ENCODE measurements at regions of chr2 and their contacts with region 1.

Region 1: DNA sequence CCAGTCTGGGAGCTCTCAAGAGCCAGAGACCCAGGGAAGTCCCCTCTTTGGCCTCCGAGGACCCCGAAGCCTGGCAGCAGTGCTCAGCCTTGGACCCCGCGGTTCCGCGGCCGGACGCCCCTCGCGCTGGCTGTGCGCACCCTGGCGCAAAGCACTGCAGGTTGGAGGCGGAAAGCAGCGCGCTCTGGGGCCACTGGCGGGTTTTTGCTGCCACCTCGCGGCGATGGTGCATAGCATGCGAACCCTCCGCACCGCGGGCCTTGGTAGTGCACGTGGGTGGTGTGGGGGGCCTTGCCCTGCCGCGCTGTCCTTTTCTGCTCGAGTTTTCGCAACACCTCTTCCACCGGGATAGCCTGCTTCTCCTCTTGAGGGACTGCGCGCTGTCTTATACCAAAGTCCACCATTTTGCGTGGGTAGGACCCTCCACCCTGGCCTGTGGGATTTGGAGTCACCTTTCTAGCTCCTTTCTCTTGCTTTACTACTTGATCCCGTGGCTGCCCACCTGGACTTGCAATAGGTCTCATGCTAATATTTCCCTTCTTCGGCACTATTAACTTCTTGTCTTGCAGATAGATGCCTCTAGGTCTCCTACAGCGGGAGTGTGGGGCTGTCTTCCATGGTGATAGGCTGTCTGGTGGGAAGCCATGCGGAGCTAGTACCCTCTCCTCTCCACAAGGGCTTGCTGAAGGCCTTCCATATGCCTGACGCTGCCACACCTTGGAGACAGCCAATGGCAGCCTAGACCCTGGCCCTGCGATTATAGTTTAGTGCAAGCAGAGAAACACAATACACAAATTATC is 14.3 kb downstream of the SIX3 start:
- DNase-seq: peak; percentile 60 to 81
- H3K4me3 ChIP-seq: peak overlapping the region; percentile 17 to 34
- H3K27ac ChIP-seq: no peak overlapping the region
- H3K4me1 ChIP-seq: peaks cover 0 to 37% (median 33%) of the 10 kb centered on the region in 4 donors
- H3K27me3 ChIP-seq: peaks cover 4 to 72% of the 10 kb centered on the region in 2 donors
- CTCF ChIP-seq: peak; percentile 84 to 88

Region 2: DNA sequence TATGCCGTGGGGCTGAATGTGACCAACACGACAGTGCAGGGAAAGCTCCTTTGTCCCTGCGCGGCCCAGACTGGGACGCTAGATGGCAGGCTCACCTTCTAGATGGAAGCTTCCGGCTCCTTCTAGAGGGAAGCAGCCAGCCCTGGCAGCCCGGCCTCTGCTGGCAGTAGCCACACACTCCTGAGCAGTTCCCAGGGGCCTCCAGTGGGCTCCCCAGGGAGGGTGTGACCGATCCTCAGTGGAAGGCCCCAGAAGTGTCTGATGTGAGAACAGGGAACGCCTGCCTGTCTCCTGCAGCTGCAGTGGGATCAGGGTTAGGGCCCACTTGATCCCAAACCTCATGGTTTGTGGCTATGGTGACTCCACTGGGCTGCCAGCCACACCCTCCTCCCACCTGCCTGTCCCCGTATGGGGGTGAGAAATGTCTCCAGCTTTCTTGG is 911.5 kb before region 1 on chr2:
- intact Hi-C with region 1: loop called (anchors 10 kb)
- DNase-seq: peak; percentile 81 to 91
- H3K4me3 ChIP-seq: no peak overlapping the region
- H3K27ac ChIP-seq: no peak overlapping the region
- H3K4me1 ChIP-seq: peaks cover 0 to 8% (median 7%) of the 10 kb centered on the region in 4 donors
- H3K27me3 ChIP-seq: no peaks in the 10 kb centered on the region
- CTCF ChIP-seq: peak; percentile 85 to 90

Region 3: DNA sequence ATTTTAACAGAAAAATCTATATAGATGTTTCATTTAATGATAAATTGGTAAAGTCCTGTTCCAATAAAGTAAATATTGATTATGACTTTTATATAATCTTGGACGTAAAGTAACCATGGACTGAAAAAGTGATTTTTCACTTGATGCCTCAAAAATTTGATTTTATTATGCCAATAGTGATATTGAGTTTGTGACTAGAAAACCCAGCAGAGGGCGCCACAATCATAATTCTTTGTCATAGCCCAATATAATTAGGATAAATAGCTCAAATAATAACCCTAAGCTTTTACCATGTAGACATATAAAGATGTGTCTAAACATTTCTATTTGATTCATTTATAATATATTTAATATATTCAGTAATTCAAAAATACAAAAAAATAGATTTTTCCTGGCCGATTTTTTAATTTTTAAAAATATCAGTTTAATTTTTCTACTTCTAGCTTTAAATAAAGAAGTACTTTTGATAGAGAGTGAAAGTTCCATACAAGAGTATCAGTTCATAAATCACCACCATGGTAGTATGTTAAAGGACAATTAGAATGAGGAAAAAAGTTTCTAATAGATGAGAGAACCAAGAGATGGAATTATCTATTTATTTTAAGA is 563.4 kb before region 1 on chr2:
- intact Hi-C with region 1: loop called (anchors 10 kb)
- DNase-seq: peak in 1 of 2 donors; percentile 41
- H3K4me3 ChIP-seq: no peak overlapping the region
- H3K27ac ChIP-seq: no peak overlapping the region
- H3K4me1 ChIP-seq: no peaks in the 10 kb centered on the region
- H3K27me3 ChIP-seq: no peaks in the 10 kb centered on the region
- CTCF ChIP-seq: peak; percentile 33 to 42

Region 4: GRCh38 chr2:44479122-44479887 is 476.5 kb before region 1 on chr2:
- intact Hi-C with region 1: loop called (anchors 5 kb)
- DNase-seq: peak in 1 of 2 donors; percentile 24
- H3K4me3 ChIP-seq: no peak overlapping the region
- H3K27ac ChIP-seq: no peak overlapping the region
- H3K4me1 ChIP-seq: no peaks in the 10 kb centered on the region
- H3K27me3 ChIP-seq: no peaks in the 10 kb centered on the region
- CTCF ChIP-seq: peak; percentile 99 to 100